Caco-2 (cell line): ENCODE measurements at regions of chr9 and their contacts with region 1.

Region 1: GRCh38 chr9:70602321-70603019 is 188.0 kb upstream of the KLF9 start:
- DNase-seq: peak; percentile 18 to 26
- H3K4me3 ChIP-seq: no peak overlapping the region
- H3K4me3 Mint-ChIP-seq: no peak overlapping the region
- H3K27ac Mint-ChIP-seq: no peak overlapping the region
- H3K4me1 ChIP-seq: no peaks in the 10 kb centered on the region
- H3K4me1 Mint-ChIP-seq: no peaks in the 10 kb centered on the region
- H3K27me3 ChIP-seq: no peaks in the 10 kb centered on the region
- H3K27me3 Mint-ChIP-seq: peaks cover 3% of the 10 kb centered on the region
- CTCF ChIP-seq: peak; percentile 32 to 41

Region 2: DNA sequence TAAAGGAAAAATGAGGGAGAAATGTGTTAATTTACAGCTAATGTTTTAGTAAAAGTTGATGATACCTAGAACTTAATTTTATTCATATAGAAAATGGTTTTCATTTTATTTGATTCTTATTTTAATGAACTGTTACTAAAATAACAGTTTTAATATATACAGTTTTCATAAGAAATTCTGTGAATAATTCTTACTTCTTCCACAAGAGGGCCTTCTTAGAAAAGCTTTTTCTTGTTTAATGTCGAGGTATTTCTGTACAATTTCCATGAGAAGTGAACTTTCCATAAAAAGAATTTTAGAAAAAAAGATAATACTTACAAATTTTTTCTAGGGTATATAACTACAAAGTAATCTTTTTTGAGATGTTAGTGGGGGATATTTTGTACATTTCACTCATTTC is 261.9 kb before region 1 on chr9:
- CTCF ChIA-PET with region 1: interaction called, 3 read pairs
- POLR2A ChIA-PET with region 1: no interaction called
- intact Hi-C with region 1: loop called (anchors 2 kb)
- DNase-seq: no peak
- H3K4me3 ChIP-seq: no peak overlapping the region
- H3K4me3 Mint-ChIP-seq: no peak overlapping the region
- H3K27ac Mint-ChIP-seq: no peak overlapping the region
- H3K4me1 ChIP-seq: no peaks in the 10 kb centered on the region
- H3K4me1 Mint-ChIP-seq: no peaks in the 10 kb centered on the region
- H3K27me3 ChIP-seq: no peaks in the 10 kb centered on the region
- H3K27me3 Mint-ChIP-seq: no peaks in the 10 kb centered on the region
- CTCF ChIP-seq: no peak

Region 3: GRCh38 chr9:70382709-70383605 is 219.5 kb before region 1 on chr9:
- CTCF ChIA-PET with region 1: no interaction called
- POLR2A ChIA-PET with region 1: no interaction called
- intact Hi-C with region 1: no loop called
- DNase-seq: no peak
- H3K4me3 ChIP-seq: no peak overlapping the region
- H3K4me3 Mint-ChIP-seq: no peak overlapping the region
- H3K27ac Mint-ChIP-seq: no peak overlapping the region
- H3K4me1 ChIP-seq: no peaks in the 10 kb centered on the region
- H3K4me1 Mint-ChIP-seq: no peaks in the 10 kb centered on the region
- H3K27me3 ChIP-seq: no peaks in the 10 kb centered on the region
- H3K27me3 Mint-ChIP-seq: no peaks in the 10 kb centered on the region
- CTCF ChIP-seq: no peak